Heart right ventricle (tissue), 16 donors: ENCODE measurements at regions of chr11 and their contacts with region 1.

Region 1: DNA sequence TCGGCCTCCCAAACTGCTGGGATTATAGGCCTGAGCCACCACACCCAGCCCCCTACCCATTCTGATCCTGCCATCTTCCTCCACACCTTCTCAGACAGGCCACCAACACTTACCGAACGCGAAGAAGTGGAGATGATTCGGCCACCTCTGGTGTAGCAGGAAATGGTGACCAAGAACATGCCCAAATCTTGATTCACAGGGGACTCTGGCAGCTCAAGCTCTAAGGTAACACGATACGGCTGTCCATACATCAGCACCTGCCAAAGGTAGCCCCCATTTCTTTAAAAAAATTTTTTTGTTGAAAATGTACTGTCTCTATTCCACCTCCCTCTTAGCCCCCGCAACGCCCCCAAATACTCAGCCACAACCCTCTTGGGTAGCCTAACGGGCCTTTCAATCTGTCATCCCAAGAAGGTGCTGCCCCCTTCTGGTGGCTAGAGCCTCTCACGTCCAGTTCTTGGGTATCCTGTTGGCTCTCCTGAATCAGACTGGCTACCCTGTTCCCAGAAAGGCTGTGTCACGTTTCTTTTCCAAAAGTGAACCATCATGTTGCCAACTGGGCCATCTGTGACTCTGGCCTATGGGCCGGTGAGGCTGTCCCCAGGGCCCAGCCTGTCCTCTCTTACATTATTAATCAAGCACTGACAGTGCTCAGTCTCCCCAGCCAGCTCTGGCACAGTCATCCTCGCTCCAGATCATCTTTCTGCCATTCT is 5.3 kb upstream of the LRRN4CL start:
- DNase-seq: peak; percentile 71 to 84
- ATAC-seq: peak; percentile 71 to 85 (median 78)
- H3K4me3 ChIP-seq: no peak overlapping the region
- H3K27ac ChIP-seq: peak overlapping the region in 4 of 10 donors; percentile 15 to 44 (median 19)
- H3K4me1 ChIP-seq: peaks cover 0 to 22% (median 16%) of the 10 kb centered on the region in 9 donors
- H3K27me3 ChIP-seq: no peaks in the 10 kb centered on the region
- CTCF ChIP-seq: peak; percentile 60 to 92 (median 87)

Region 2: GRCh38 chr11:62383822-62384221 is 310.8 kb before region 1 on chr11:
- intact Hi-C with region 1: loop called in 3 of 10 experiments (anchors 5 to 10 kb)
- DNase-seq: no peak
- ATAC-seq: no peak
- H3K4me3 ChIP-seq: no peak overlapping the region
- H3K27ac ChIP-seq: no peak overlapping the region
- H3K4me1 ChIP-seq: peaks cover 0 to 9% (median 6%) of the 10 kb centered on the region in 9 donors
- H3K27me3 ChIP-seq: no peaks in the 10 kb centered on the region
- CTCF ChIP-seq: no peak

Region 3: DNA sequence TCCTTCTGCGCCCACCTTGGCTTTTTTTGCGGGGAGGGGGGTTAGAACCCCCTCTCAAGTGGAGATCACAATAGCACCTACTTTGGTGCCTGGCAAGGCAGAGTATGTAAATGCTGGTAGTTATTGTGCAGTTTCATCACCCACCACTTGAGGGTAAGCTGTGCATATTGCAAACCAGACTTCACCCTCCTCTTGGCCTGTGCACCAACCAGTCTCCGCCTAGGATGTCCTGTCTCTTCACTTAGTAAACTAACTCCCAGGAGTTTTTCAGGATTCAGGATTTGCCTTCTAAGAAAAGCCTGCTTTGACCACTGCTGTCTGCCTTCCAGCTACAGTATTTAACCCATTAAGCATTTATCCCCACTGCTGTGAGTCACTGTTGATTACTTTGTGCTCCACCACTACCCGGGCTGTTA is 13.8 kb before region 1 on chr11:
- intact Hi-C with region 1: loop called in 1 of 10 experiments (anchors 2 kb)
- DNase-seq: peak in 1 of 2 donors; percentile 62
- ATAC-seq: peak; percentile 35 to 77 (median 70)
- H3K4me3 ChIP-seq: no peak overlapping the region
- H3K27ac ChIP-seq: peak overlapping the region in 8 of 10 donors; percentile 1 to 97 (median 36)
- H3K4me1 ChIP-seq: peaks cover 8 to 43% (median 33%) of the 10 kb centered on the region in 9 donors
- H3K27me3 ChIP-seq: no peaks in the 10 kb centered on the region
- CTCF ChIP-seq: peak; percentile 42 to 68 (median 56)